Activated CD8-positive, alpha-beta T cell treated with anti-CD3 and anti-CD28 coated beads for 36 hours (primary cell): ENCODE measurements at regions of chr12 and their contacts with region 1.

Region 1: DNA sequence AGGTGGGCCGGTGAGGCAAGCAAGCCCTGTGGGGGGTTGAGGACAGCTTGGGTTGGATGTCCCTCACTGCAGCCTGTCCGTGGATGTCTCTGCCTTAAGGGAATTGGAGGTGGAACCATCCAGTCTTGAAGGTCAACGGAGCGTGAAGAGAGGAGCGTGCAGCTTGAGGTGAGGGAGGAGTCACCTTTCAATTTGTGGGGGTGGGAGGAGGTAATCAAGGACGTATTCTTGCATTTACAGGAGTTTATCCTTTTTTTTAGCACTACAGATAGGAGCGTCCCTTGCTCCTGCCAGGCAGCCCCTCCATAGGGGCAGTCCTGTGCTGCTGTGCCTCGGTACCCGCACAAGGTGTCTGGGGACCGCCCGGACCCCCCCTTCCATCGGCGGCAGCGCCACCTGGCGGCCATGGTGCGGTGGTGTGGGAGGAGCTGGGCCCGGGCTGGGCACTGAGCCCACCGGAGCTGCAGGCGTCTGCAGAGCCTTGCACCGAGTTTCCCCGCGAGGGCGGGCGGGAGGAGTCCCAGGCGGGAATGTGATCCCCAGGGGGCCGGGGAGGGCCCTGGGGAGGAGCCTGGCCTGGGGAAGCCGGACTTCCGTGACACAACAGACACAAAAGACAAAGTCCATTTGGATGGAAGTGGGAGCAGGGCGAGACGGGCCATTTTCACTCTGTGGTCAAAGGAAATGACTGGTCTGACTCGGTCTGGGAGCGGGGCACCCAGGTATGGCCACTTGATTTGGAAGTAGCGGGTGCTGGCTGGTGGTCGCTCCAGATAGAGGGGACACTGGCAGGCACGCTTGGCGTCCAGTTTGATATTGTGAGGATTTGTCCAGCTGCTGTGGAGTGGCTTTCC is 923 bp downstream of the DNAJC22 start:
- DNase-seq: peak; percentile 75
- ATAC-seq: peak; percentile 59
- H3K4me3 Mint-ChIP-seq: peak overlapping the region; percentile 65
- H3K27ac Mint-ChIP-seq: no peak overlapping the region
- H3K4me1 Mint-ChIP-seq: peaks cover 38% of the 10 kb centered on the region
- H3K27me3 Mint-ChIP-seq: peaks cover 62% of the 10 kb centered on the region
- CTCF ChIP-seq: peak; percentile 100

Region 2: DNA sequence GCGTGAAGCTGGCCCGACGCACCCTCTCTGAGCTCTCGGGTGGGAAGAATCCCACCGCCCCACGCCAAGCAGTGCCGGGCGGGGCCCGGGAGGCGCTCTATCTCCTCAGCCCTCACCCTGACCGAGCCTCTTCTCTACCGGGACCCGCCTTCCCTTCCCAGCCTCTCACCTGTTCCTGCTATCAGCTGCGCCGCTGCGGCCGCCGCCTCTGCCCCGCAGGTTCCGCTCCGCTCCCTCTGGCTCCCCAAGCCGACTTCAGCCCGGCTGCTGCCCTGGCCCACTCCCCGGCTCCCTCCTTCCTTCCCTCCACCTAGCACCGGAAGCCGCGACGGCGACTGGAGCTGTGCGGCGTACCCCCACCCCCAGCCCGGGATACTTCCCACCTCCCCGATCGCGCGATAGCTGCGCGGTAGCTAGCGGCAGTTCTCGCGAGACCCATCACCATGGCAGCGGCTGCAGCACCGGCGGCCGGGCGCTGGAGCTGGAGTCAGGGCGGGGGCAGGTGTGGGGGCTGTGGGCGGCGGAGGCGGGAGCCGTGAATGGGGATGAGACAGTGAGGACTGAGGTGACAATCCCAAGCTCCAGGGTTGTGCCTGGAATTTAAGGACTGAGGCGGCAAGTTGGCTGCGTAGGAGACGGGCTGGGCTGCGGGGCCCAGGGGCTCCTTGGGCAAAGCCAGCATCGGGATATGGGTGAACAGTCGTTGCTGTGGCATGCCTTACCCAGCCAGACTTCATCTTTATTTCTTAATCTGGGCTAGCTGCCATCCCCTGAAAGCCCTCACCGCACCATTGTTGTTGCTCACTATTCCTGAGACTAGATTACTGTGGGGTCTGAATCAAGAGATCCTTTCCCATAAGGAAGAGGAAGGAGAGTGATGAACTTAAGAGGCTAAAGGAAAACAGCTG is 390.2 kb before region 1 on chr12 and contains the start of gene ARF3:
- CTCF ChIA-PET with region 1: no interaction called
- POLR2A ChIA-PET with region 1: no interaction called
- intact Hi-C with region 1: no loop called
- DNase-seq: peak; percentile 94
- ATAC-seq: peak; percentile 96
- H3K4me3 Mint-ChIP-seq: peak within 1 kb of the TSS; percentile 96
- H3K27ac Mint-ChIP-seq: peak within 1 kb of the TSS; percentile 87
- H3K4me1 Mint-ChIP-seq: peaks cover 25% of the 10 kb centered on the region
- H3K27me3 Mint-ChIP-seq: peaks cover 7% of the 10 kb centered on the region
- CTCF ChIP-seq: no peak
- total RNA-seq, gene ARF3: 58.3 to 67.6 TPM

Region 3: GRCh38 chr12:49264738-49265515 is 82.7 kb before region 1 on chr12 and contains the start of gene TUBA1C:
- CTCF ChIA-PET with region 1: interaction called, 10 read pairs
- POLR2A ChIA-PET with region 1: interaction called, 7 read pairs
- intact Hi-C with region 1: no loop called
- DNase-seq: peak; percentile 92
- ATAC-seq: peak; percentile 90
- H3K4me3 Mint-ChIP-seq: peak within 1 kb of the TSS; percentile 95
- H3K27ac Mint-ChIP-seq: peak within 1 kb of the TSS; percentile 98
- H3K4me1 Mint-ChIP-seq: peaks cover 38% of the 10 kb centered on the region
- H3K27me3 Mint-ChIP-seq: peaks cover 1% of the 10 kb centered on the region
- CTCF ChIP-seq: no peak
- total RNA-seq, gene TUBA1C: 237 to 240 TPM

Region 4: GRCh38 chr12:49296034-49296835 is 51.4 kb before region 1 on chr12:
- CTCF ChIA-PET with region 1: interaction called, 145 read pairs
- POLR2A ChIA-PET with region 1: interaction called, 5 read pairs
- intact Hi-C with region 1: no loop called
- DNase-seq: peak; percentile 73
- ATAC-seq: peak; percentile 82
- H3K4me3 Mint-ChIP-seq: peak overlapping the region; percentile 47
- H3K27ac Mint-ChIP-seq: no peak overlapping the region
- H3K4me1 Mint-ChIP-seq: peaks cover 13% of the 10 kb centered on the region
- H3K27me3 Mint-ChIP-seq: peaks cover 53% of the 10 kb centered on the region
- CTCF ChIP-seq: peak; percentile 97

Region 5: DNA sequence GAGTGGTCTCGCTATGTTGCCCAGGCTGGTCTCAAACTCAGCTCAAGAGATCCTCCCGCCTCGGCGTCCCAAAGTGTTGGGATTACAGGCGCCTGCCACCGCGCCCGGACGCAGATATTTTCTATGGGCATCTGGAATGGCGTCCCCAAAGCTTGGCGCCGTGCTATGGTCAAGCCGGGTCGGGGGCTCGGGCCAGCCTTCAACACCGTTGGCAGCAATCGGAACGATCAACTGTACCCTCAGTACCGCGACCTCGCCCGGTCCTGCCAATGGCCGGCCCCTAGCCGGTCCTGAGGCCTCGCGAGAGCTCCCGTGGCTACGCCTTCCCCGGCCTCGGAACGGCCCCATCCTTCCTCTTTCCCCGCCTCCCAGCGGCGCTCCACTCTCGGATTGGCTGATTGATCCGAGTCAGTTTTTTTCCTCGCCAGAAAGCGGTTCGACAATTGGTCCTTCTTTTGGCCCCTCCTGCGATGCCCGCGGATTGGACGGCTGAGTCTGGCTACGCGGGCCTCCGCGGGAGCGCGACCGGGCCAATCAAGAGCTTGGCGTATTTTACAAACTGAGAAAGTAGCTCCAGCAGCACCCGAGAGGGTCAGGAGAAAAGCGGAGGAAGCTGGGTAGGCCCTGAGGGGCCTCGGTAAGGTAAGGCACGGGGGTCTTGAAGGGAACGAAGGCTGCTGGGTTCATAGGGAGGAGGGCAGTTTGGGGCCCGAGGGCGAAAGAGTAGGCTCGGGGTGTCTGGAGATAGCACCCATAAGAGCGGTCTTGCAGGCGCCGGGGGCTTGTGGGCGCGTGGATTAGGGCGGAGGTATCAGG is 24.7 kb before region 1 on chr12 and contains the start of gene TROAP:
- CTCF ChIA-PET with region 1: interaction called, 42 read pairs
- POLR2A ChIA-PET with region 1: interaction called, 12 read pairs
- intact Hi-C with region 1: no loop called
- DNase-seq: peak; percentile 98
- ATAC-seq: peak; percentile 96
- H3K4me3 Mint-ChIP-seq: peak within 1 kb of the TSS; percentile 100
- H3K27ac Mint-ChIP-seq: peak within 1 kb of the TSS; percentile 92
- H3K4me1 Mint-ChIP-seq: peaks cover 10% of the 10 kb centered on the region
- H3K27me3 Mint-ChIP-seq: no peaks in the 10 kb centered on the region
- CTCF ChIP-seq: no peak
- total RNA-seq, gene TROAP: 46.6 to 52.6 TPM

Region 6: DNA sequence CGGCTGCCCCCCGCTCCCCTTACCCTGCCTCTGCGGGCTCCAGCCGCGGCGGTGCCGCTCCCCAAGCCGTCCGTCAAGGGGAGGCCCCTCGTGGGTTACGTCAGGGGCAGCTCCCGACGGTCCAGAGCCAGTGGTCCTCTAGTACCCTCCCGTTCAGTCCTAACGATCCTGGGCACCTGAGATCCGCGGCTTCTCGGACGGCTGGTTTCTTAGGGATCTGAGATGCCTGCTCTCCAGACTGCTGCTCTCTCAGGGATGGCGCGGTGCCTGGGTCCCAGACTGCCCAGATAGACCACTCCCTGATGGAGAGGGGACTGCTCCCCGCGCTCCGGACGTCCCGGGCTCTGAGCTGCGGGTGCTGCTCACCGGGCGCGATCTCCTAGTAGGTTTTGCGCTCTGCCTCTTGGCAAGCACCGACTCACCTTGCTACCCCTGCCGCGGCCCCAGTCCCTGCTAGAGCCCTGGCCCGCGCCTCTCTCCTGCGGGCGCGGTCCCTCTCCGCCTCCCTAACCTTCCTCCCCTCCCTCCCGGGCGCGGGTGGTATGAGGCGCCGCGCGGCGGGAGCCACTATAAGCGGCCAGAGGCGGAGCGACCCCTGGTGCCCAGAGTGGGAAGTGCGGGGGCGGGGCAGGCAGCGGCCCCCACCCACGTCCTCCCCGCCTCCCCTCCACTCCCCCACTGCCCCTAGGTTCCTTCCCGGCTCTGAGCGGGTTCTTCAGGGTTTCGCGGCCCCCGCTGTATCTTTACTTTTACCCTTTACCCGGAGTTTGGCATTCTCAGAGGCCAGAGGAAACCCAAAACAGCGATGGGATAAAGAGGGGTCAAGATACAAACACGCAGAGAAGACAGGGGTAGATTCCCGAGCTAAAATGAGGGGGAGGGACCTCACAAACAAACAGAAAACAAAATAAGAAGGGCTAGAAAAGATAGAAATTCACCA is 10.7 kb before region 1 on chr12 and contains the start of gene C1QL4:
- CTCF ChIA-PET with region 1: interaction called, 52 read pairs
- POLR2A ChIA-PET with region 1: interaction called, 11 read pairs
- intact Hi-C with region 1: no loop called
- DNase-seq: peak; percentile 90
- ATAC-seq: peak; percentile 89
- H3K4me3 Mint-ChIP-seq: peak within 1 kb of the TSS; percentile 35
- H3K27ac Mint-ChIP-seq: no peak within 1 kb of the TSS
- H3K4me1 Mint-ChIP-seq: peaks cover 15% of the 10 kb centered on the region
- H3K27me3 Mint-ChIP-seq: peaks cover 71% of the 10 kb centered on the region
- CTCF ChIP-seq: peak; percentile 96
- total RNA-seq, gene C1QL4: not detected

Region 7: GRCh38 chr12:49375406-49375805 is 27.8 kb after region 1 on chr12:
- CTCF ChIA-PET with region 1: interaction called, 12 read pairs
- POLR2A ChIA-PET with region 1: no interaction called
- intact Hi-C with region 1: no loop called
- DNase-seq: no peak
- ATAC-seq: peak; percentile 34
- H3K4me3 Mint-ChIP-seq: no peak overlapping the region
- H3K27ac Mint-ChIP-seq: no peak overlapping the region
- H3K4me1 Mint-ChIP-seq: peaks cover 6% of the 10 kb centered on the region
- H3K27me3 Mint-ChIP-seq: no peaks in the 10 kb centered on the region
- CTCF ChIP-seq: no peak

Region 8: DNA sequence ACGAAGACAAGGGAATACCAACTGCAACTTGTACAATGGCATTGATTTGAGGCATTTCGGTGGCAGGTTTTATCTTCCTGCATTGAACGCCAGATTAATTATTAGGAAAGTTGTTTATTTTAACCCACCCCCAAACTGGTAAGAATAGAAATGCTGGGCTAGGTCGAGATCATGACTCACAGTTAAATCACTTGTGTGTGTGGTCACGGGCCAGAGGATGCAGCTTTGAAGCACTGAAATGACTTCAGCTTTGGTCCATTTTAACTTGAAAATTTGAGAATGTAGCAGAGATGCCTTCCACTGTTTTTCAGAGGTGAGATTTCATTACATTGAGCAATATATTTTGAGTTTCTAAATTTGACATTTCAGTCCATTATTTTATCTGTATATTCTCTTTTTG is 167.7 kb after region 1 on chr12:
- CTCF ChIA-PET with region 1: interaction called, 58 read pairs
- POLR2A ChIA-PET with region 1: no interaction called
- intact Hi-C with region 1: no loop called
- DNase-seq: no peak
- ATAC-seq: no peak
- H3K4me3 Mint-ChIP-seq: no peak overlapping the region
- H3K27ac Mint-ChIP-seq: no peak overlapping the region
- H3K4me1 Mint-ChIP-seq: peaks cover 10% of the 10 kb centered on the region
- H3K27me3 Mint-ChIP-seq: no peaks in the 10 kb centered on the region
- CTCF ChIP-seq: no peak